Natural killer cell (primary cell): ENCODE measurements at regions of chr2 and their contacts with region 1.

Region 1: GRCh38 chr2:232444409-232445148 is 11.4 kb upstream of the ALPI start:
- DNase-seq: peak in 1 of 2 donors; percentile 77
- ATAC-seq: peak; percentile 34 to 56 (median 44)
- H3K4me3 ChIP-seq: no peak overlapping the region
- H3K4me3 Mint-ChIP-seq: no peak overlapping the region
- H3K27ac ChIP-seq: no peak overlapping the region
- H3K27ac Mint-ChIP-seq: no peak overlapping the region
- H3K4me1 ChIP-seq: peaks cover 11% of the 10 kb centered on the region
- H3K4me1 Mint-ChIP-seq: peaks cover 0 to 11% of the 10 kb centered on the region in 2 donors
- H3K27me3 ChIP-seq: no peaks in the 10 kb centered on the region
- H3K27me3 Mint-ChIP-seq: no peaks in the 10 kb centered on the region
- CTCF ChIP-seq: peak; percentile 48

Region 2: GRCh38 chr2:231854671-231855070 is 589.9 kb before region 1 on chr2:
- intact Hi-C with region 1: loop called (anchors 1 kb)
- DNase-seq: no peak
- ATAC-seq: no peak
- H3K4me3 ChIP-seq: no peak overlapping the region
- H3K4me3 Mint-ChIP-seq: no peak overlapping the region
- H3K27ac ChIP-seq: no peak overlapping the region
- H3K27ac Mint-ChIP-seq: no peak overlapping the region
- H3K4me1 ChIP-seq: no peaks in the 10 kb centered on the region
- H3K4me1 Mint-ChIP-seq: peaks cover 6 to 7% of the 10 kb centered on the region in 2 donors
- H3K27me3 ChIP-seq: no peaks in the 10 kb centered on the region
- H3K27me3 Mint-ChIP-seq: peaks cover 9 to 16% of the 10 kb centered on the region in 2 donors
- CTCF ChIP-seq: no peak

Region 3: DNA sequence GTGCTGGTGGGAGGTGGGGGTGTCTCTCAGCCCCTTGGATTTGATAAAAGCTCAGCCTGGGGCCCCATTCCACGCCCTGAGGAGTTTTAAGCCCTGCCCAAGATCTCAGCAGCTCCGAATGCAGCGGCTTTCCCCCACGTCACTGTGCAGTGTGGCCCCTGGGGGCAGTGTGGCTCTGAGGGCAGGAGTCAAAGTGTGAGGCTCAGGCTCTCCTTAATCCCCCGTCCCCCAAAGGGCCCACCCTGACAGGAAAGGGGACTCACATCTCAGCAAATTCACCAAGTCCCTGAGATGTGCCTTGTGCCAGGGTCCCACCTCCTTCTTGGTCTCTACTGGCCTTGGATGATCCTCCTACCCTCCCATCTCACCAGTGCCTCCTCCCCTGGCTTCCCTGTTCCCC is 543.6 kb before region 1 on chr2:
- intact Hi-C with region 1: loop called (anchors 1 kb)
- DNase-seq: no peak
- ATAC-seq: no peak
- H3K4me3 ChIP-seq: no peak overlapping the region
- H3K4me3 Mint-ChIP-seq: no peak overlapping the region
- H3K27ac ChIP-seq: no peak overlapping the region
- H3K27ac Mint-ChIP-seq: no peak overlapping the region
- H3K4me1 ChIP-seq: peaks cover 3% of the 10 kb centered on the region
- H3K4me1 Mint-ChIP-seq: no peaks in the 10 kb centered on the region
- H3K27me3 ChIP-seq: no peaks in the 10 kb centered on the region
- H3K27me3 Mint-ChIP-seq: peaks cover 0 to 4% of the 10 kb centered on the region in 2 donors
- CTCF ChIP-seq: no peak

Region 4: GRCh38 chr2:231925303-231926179 is 519.0 kb before region 1 on chr2:
- intact Hi-C with region 1: loop called (anchors 5 kb)
- DNase-seq: peak; percentile 71 to 83
- ATAC-seq: peak; percentile 74 to 90 (median 88)
- H3K4me3 ChIP-seq: no peak overlapping the region
- H3K4me3 Mint-ChIP-seq: peak overlapping the region; percentile 52
- H3K27ac ChIP-seq: no peak overlapping the region
- H3K27ac Mint-ChIP-seq: no peak overlapping the region
- H3K4me1 ChIP-seq: peaks cover 20% of the 10 kb centered on the region
- H3K4me1 Mint-ChIP-seq: peaks cover 0 to 5% of the 10 kb centered on the region in 2 donors
- H3K27me3 ChIP-seq: peaks cover 30% of the 10 kb centered on the region
- H3K27me3 Mint-ChIP-seq: peaks cover 48 to 54% of the 10 kb centered on the region in 2 donors
- CTCF ChIP-seq: peak; percentile 83

Region 5: DNA sequence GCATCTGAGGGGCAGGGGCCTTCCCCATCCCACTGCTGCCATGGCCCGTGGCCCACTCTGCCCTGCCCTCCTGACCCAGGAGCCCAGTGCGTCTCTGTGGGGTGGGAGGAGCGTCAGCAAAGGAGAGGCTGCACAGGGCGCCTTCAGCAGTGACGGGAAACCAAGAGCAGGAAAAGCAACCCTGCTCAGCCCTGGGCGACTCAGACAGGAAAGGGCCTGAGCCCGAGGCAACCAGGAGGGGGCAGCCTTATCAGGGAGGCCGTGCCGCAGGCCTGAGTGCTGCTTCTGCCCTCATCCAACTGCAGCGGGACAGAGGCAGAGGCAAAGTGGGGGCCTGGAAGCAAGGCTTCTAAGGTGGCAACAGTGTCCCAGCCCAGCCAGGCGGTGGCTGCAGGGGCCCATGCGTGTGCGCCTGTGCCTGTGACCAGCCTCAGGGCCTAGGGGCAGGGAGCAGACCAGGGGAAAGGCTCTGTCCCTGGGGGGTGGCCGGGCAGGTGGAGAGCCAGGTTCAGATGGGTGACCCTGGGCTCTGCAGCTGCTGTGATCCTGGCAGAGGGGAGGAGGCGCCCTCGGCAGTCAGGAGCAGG is 11.9 kb before region 1 on chr2:
- intact Hi-C with region 1: no loop called
- DNase-seq: no peak
- ATAC-seq: no peak
- H3K4me3 ChIP-seq: no peak overlapping the region
- H3K4me3 Mint-ChIP-seq: no peak overlapping the region
- H3K27ac ChIP-seq: no peak overlapping the region
- H3K27ac Mint-ChIP-seq: no peak overlapping the region
- H3K4me1 ChIP-seq: no peaks in the 10 kb centered on the region
- H3K4me1 Mint-ChIP-seq: no peaks in the 10 kb centered on the region
- H3K27me3 ChIP-seq: no peaks in the 10 kb centered on the region
- H3K27me3 Mint-ChIP-seq: no peaks in the 10 kb centered on the region
- CTCF ChIP-seq: no peak